ENCODE measurements at regions of chr18 and their contacts with region 1.

Region 1: DNA sequence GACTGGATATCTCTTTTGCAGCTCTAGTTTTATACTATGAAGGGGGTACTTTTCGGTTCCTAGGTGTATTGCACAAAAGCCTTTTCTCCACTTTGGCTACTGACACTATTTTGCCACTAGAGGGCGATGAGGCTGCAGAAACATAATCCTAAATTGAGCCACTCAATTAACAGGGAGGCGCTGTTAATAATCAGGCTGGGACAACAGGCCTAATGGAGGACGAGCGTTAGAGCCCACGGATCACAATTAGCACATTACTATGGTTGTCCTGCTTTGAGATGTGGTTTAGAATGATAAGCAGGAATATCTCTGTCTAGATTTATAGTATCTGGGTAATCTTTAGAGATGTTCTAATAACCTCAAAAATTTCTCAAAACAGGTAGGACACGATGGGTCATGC is 62.2 kb upstream of the PMAIP1 start:
- DNase-seq: peak in 12 of 14 experiments; percentile 3 to 73 (median 28)
- ATAC-seq: no peak
- H3K4me3 ChIP-seq: no peak overlapping the region
- H3K4me3 Mint-ChIP-seq: no peak overlapping the region
- H3K27ac ChIP-seq: no peak overlapping the region
- H3K27ac Mint-ChIP-seq: no peak overlapping the region
- H3K4me1 ChIP-seq: no peaks in the 10 kb centered on the region
- H3K4me1 Mint-ChIP-seq: no peaks in the 10 kb centered on the region
- H3K27me3 ChIP-seq: peaks cover 0 to 2% of the 10 kb centered on the region in 2 experiments
- H3K27me3 Mint-ChIP-seq: no peaks in the 10 kb centered on the region
- CTCF ChIP-seq: peak; percentile 92

Region 2: DNA sequence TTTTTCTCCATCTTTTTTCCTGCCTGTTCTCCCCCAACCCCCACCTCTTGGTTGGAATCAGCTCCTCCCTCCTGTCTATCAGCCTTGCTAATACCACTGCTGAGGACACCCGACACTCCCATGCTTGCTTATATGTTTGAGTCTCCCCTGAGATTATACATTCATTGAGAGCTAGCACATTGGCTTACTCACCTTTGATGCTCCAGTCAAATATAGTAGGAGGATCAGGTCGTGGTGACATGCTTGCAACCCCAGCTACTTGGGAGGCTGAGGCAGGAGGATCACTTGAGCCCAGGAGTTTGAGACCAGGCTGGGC is 48.8 kb before region 1 on chr18:
- CTCF ChIA-PET with region 1: no interaction called
- POLR2A ChIA-PET with region 1: no interaction called
- intact Hi-C with region 1: no loop called
- DNase-seq: no peak
- ATAC-seq: no peak
- H3K4me3 ChIP-seq: no peak overlapping the region
- H3K4me3 Mint-ChIP-seq: no peak overlapping the region
- H3K27ac ChIP-seq: no peak overlapping the region
- H3K27ac Mint-ChIP-seq: no peak overlapping the region
- H3K4me1 ChIP-seq: no peaks in the 10 kb centered on the region
- H3K4me1 Mint-ChIP-seq: no peaks in the 10 kb centered on the region
- H3K27me3 ChIP-seq: no peaks in the 10 kb centered on the region
- H3K27me3 Mint-ChIP-seq: peaks cover 5% of the 10 kb centered on the region
- CTCF ChIP-seq: no peak

Region 3: DNA sequence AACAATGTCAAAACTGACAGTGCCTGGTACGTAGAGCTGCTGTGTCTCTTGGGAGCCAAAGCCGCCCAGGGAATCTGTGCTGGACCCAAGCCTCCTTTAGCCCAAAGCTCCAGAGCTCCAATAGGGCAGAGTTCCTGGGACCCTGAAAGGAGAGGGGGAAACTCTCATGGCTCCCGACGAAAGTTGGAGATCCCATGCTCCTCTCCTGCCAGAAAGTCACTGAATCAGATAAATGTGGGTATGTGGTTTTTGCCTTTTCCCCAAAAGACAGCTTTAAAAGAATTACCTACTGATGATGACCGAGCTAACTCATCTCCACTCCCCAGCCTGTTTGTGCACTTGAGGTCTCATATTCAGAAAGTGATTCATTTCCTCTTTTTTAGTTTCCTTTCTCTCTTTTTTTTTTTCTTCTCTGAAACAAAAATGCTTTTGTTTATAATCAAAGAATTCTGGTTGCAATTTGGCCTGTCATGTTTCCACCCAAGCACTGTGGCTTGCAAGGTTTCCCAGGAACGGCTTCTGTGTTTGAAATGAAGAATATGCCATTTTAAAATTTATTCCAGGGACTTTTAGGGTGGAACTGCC is 48.1 kb after region 1 on chr18:
- CTCF ChIA-PET with region 1: no interaction called
- POLR2A ChIA-PET with region 1: no interaction called
- intact Hi-C with region 1: no loop called
- DNase-seq: peak in 4 of 14 experiments; percentile 32 to 70 (median 52)
- ATAC-seq: peak; percentile 66
- H3K4me3 ChIP-seq: no peak overlapping the region
- H3K4me3 Mint-ChIP-seq: peak overlapping the region; percentile 36
- H3K27ac ChIP-seq: peak overlapping the region in 1 of 2 donors; percentile 3
- H3K27ac Mint-ChIP-seq: peak overlapping the region; percentile 55
- H3K4me1 ChIP-seq: peaks cover 21% of the 10 kb centered on the region
- H3K4me1 Mint-ChIP-seq: peaks cover 30% of the 10 kb centered on the region
- H3K27me3 ChIP-seq: no peaks in the 10 kb centered on the region
- H3K27me3 Mint-ChIP-seq: no peaks in the 10 kb centered on the region
- CTCF ChIP-seq: no peak

Region 4: DNA sequence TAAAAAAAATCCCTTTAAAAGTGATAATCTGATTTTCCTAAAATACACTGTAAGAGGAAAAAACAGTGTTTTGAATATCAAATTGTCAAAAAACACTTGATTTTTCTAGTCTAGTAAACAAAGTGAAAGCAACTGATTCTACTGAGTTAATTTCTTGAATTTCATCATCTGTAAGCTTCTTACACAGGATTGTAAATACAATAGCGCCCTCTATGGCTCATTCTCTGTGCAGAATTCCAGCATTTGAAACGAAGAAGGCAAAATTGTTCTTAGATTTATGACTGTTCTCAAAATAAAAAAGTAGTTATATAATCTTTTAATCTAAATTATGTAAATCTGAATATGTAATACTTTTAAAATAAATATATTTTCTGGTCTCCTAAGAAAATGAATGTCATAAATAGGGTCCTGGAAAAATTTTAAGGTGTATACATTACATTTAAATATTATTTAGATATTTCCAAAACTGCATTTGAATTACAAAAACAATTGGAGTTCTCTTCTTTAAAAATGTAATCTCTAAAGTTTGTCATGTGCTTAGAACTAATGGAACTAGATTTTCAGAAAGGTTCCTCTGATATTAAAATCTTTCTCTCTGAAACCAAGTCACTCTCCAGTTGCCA is 711.9 kb after region 1 on chr18:
- CTCF ChIA-PET with region 1: no interaction called
- POLR2A ChIA-PET with region 1: no interaction called
- intact Hi-C with region 1: loop called (anchors 5 kb)
- DNase-seq: peak in 3 of 14 experiments; percentile 27 to 33 (median 27)
- ATAC-seq: no peak
- H3K4me3 ChIP-seq: no peak overlapping the region
- H3K4me3 Mint-ChIP-seq: no peak overlapping the region
- H3K27ac ChIP-seq: no peak overlapping the region
- H3K27ac Mint-ChIP-seq: no peak overlapping the region
- H3K4me1 ChIP-seq: no peaks in the 10 kb centered on the region
- H3K4me1 Mint-ChIP-seq: no peaks in the 10 kb centered on the region
- H3K27me3 ChIP-seq: no peaks in the 10 kb centered on the region
- H3K27me3 Mint-ChIP-seq: no peaks in the 10 kb centered on the region
- CTCF ChIP-seq: peak; percentile 41